Right lobe of liver (tissue), 6 donors: ENCODE measurements at regions of chrX and their contacts with region 1.

Region 1: GRCh38 chrX:38166478-38167083 is 54.1 kb downstream of the SRPX start:
- DNase-seq: no peak
- ATAC-seq: peak in 2 of 4 donors; percentile 50 to 51
- H3K4me3 ChIP-seq: no peak overlapping the region
- H3K27ac ChIP-seq: no peak overlapping the region
- H3K4me1 ChIP-seq: no peaks in the 10 kb centered on the region
- H3K27me3 ChIP-seq: no peaks in the 10 kb centered on the region
- CTCF ChIP-seq: peak; percentile 64 to 85 (median 74)
- POLR2A ChIP-seq: no peak

Region 2: DNA sequence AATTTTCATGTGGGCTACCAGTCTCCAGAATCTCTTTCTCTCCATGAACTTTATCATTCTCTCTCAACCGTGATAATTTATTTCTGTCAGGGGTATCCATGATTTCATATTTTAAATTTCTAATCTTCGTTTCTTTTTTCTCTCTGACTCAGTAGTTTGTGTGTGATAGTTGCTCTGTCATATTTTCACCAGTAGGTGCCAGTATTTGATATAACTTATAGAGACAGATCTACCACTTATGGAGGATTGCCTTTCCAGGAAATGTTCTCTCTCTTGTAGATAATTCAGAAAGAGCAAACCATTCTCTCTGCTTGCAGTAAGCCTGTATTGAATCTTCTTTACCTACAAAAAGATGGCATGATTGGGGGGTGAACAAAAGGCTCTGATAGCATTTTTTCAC is 239.9 kb before region 1 on chrX:
- intact Hi-C with region 1: loop called in 1 of 2 experiments (anchors 10 kb)
- DNase-seq: no peak
- ATAC-seq: peak; percentile 70 to 84 (median 76)
- H3K4me3 ChIP-seq: no peak overlapping the region
- H3K27ac ChIP-seq: no peak overlapping the region
- H3K4me1 ChIP-seq: no peaks in the 10 kb centered on the region
- H3K27me3 ChIP-seq: peaks cover 0 to 6% of the 10 kb centered on the region in 2 donors
- CTCF ChIP-seq: peak; percentile 65 to 72 (median 66)
- POLR2A ChIP-seq: no peak

Region 3: DNA sequence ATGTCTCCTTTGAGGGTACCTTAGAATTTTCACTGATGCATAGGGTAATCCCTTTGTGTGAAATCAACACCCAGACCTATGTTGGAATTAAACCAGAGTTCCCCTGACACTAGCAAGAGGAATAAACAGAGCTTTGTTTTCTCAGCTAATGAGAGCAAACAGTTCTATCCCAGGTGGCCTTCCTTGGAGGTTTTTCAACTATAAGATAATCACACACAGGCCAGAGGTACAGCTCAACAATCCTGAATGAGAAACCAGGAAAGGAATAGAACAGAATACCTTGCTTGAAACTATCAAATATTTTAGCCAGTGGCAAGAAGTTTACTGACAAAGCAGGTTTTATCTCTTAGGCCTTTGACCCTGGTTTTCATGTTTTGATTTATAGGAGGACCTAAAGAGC is 286.0 kb after region 1 on chrX:
- intact Hi-C with region 1: no loop called
- DNase-seq: no peak
- ATAC-seq: peak in 1 of 4 donors; percentile 35
- H3K4me3 ChIP-seq: no peak overlapping the region
- H3K27ac ChIP-seq: no peak overlapping the region
- H3K4me1 ChIP-seq: no peaks in the 10 kb centered on the region
- H3K27me3 ChIP-seq: peaks cover 0 to 3% of the 10 kb centered on the region in 2 donors
- CTCF ChIP-seq: no peak
- POLR2A ChIP-seq: no peak